HCT116 (cell line): ENCODE measurements at regions of chr12 and their contacts with region 1.

Region 1: DNA sequence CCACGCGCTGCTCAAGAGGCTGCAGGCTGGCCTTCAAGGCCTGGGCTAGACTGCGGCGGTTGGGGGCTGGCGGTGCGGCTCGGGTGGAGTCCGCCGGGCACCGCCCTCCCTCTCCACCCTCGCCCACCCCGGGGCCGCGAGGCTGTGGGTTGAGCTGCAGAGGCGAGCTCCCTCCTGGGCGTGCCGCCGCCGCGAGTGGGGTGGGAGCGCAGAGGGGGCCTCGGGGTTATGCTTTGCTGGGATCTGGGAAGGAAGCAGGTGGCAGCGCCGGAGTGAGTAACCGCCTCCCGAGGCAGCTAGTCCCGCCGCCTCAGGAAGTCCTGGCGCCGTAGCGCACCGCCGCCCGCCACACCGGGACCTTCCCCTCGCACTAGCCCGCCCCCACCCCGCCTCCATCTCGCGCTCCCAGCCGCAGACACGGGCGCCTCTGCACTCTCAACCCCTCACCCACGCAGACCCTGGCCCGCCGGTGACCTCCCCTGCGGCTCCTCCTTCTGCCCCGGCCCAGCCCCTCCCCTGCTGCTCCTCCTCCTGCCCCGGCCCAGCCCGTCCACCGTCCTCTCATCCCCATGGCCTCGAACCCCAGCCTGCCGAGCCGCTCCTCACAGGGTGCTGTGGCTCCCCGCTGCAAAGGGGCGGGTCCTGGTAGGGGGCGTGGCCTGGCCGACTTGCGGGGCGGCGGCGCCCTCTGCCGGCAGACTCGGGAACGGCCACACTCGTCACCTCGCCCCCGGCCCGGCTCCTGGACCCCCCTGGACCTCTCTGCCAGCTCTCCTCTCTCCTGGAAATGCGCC is 16.6 kb downstream of the TAMALIN start:
- DNase-seq: peak; percentile 62
- ATAC-seq: peak; percentile 71
- H3K4me3 ChIP-seq: peak overlapping the region; percentile 47 to 62
- H3K27ac ChIP-seq: peak overlapping the region; percentile 77
- H3K4me1 ChIP-seq: peaks cover 22 to 61% of the 10 kb centered on the region in 2 experiments
- H3K27me3 ChIP-seq: no peaks in the 10 kb centered on the region
- CTCF ChIP-seq: peak in 2 of 3 experiments; percentile 90; a peak in 4 of 6 replicates
- POLR2A ChIP-seq: no peak
- RAD21 ChIP-seq: no peak

Region 2: GRCh38 chr12:51994959-51995358 is 28.4 kb before region 1 on chr12:
- CTCF ChIA-PET with region 1: interaction called, 44 read pairs
- POLR2A ChIA-PET with region 1: no interaction called
- RAD21 ChIA-PET with region 1: interaction called in 1 of 2 experiments, 3 read pairs
- intact Hi-C with region 1: loop called (anchors 1 kb)
- DNase-seq: no peak
- ATAC-seq: no peak
- H3K4me3 ChIP-seq: no peak overlapping the region
- H3K27ac ChIP-seq: no peak overlapping the region
- H3K4me1 ChIP-seq: no peaks in the 10 kb centered on the region
- H3K27me3 ChIP-seq: no peaks in the 10 kb centered on the region
- CTCF ChIP-seq: no peak
- POLR2A ChIP-seq: no peak
- RAD21 ChIP-seq: no peak

Region 3: GRCh38 chr12:52010152-52010622 is 13.2 kb before region 1 on chr12:
- CTCF ChIA-PET with region 1: interaction called, 137 read pairs
- POLR2A ChIA-PET with region 1: interaction called, 15 read pairs
- RAD21 ChIA-PET with region 1: interaction called in 1 of 2 experiments, 21 read pairs
- intact Hi-C with region 1: no loop called
- DNase-seq: no peak
- ATAC-seq: peak; percentile 36; the same call in 1 of the 2 replicates
- H3K4me3 ChIP-seq: no peak overlapping the region
- H3K27ac ChIP-seq: no peak overlapping the region
- H3K4me1 ChIP-seq: no peaks in the 10 kb centered on the region
- H3K27me3 ChIP-seq: no peaks in the 10 kb centered on the region
- CTCF ChIP-seq: no peak
- POLR2A ChIP-seq: no peak
- RAD21 ChIP-seq: no peak

Region 4: GRCh38 chr12:52063981-52064649 is 40.7 kb after region 1 on chr12:
- CTCF ChIA-PET with region 1: interaction called, 70 read pairs
- POLR2A ChIA-PET with region 1: interaction called, 18 read pairs
- RAD21 ChIA-PET with region 1: interaction called, 5 to 13 read pairs
- intact Hi-C with region 1: loop called (anchors 1 kb)
- DNase-seq: no peak
- ATAC-seq: peak; percentile 33; the same call in 1 of the 2 replicates
- H3K4me3 ChIP-seq: no peak overlapping the region
- H3K27ac ChIP-seq: no peak overlapping the region
- H3K4me1 ChIP-seq: peaks cover 0 to 24% of the 10 kb centered on the region in 2 experiments; a peak in 2 of 4 replicates
- H3K27me3 ChIP-seq: no peaks in the 10 kb centered on the region
- CTCF ChIP-seq: no peak
- POLR2A ChIP-seq: no peak
- RAD21 ChIP-seq: no peak

Region 5: DNA sequence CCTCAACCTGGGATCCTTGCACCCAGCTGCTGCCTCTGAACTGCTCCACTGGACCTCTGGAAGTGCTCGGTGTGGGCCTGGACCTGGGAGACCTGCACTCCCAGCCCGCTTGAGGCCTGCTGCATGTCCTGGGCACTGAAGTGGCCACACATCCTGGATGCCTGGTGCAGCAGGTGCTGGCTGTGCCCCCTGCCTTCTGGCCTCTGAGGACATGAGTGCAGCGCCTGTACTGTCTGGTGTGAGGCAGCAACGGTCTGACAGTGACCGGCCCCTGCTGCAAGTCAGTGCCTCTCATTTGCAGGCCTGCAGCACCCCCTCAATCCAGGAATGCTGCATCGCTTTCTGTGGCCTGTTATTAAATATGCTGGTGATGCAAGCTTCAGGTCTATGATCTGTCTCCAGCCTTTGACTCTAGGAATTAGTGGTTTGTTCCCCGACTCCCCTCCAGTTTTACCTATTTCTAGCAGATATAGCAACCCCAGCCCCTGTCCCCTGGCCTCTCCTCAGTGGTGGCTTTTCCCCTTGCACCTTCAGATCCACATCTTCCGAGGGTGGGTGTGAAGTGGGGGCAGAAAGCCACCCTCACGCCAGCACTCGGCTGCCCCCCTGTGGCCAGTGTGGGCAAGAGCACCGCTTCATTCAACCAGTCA is 59.7 kb after region 1 on chr12:
- CTCF ChIA-PET with region 1: interaction called, 123 read pairs
- POLR2A ChIA-PET with region 1: interaction called, 6 read pairs
- RAD21 ChIA-PET with region 1: interaction called, 9 to 12 read pairs
- intact Hi-C with region 1: loop called (anchors 1 kb)
- DNase-seq: no peak
- ATAC-seq: peak; percentile 89
- H3K4me3 ChIP-seq: no peak overlapping the region
- H3K27ac ChIP-seq: no peak overlapping the region
- H3K4me1 ChIP-seq: peaks cover 0 to 5% of the 10 kb centered on the region in 2 experiments; a peak in 1 of 4 replicates
- H3K27me3 ChIP-seq: no peaks in the 10 kb centered on the region; the same call in 1 of the 2 replicates
- CTCF ChIP-seq: peak; percentile 96 to 100 (median 98)
- POLR2A ChIP-seq: no peak
- RAD21 ChIP-seq: peak; percentile 93

Region 6: DNA sequence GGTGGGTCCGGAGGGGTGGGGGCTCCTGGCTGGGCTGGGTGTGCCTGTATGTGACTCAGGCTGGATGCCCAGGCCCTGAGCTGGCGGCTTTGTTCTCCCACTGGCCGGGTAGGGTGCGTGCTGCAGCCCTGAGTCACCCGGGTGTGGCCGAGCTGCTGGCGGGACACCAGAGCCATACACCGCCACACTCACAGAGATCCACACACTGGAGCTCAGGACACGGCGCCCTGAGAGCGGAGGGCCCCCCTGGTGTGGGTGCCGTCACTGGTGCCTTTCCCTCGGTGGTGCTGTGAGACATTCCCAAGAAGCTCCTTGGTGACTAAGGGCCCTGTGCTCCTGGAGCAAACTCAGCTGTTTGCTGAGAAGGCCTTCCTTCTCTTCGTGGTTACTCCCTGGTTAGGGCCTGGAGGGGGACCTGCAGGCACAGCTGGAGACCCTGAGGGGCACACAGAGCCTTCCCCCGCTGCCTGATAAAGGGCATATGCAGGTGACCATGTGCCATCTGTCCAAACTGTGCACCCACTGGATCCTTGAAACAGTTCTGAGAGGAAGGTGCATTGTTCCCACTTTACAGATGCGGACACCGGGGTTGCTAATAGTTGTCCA is 124.1 kb after region 1 on chr12:
- CTCF ChIA-PET with region 1: interaction called, 22 read pairs
- POLR2A ChIA-PET with region 1: interaction called, 3 read pairs
- RAD21 ChIA-PET with region 1: interaction called in 1 of 2 experiments, 3 read pairs
- intact Hi-C with region 1: no loop called
- DNase-seq: peak; percentile 99
- ATAC-seq: peak; percentile 61
- H3K4me3 ChIP-seq: peak overlapping the region; percentile 46 to 55
- H3K27ac ChIP-seq: peak overlapping the region; percentile 100
- H3K4me1 ChIP-seq: peaks cover 83 to 99% of the 10 kb centered on the region in 2 experiments
- H3K27me3 ChIP-seq: no peaks in the 10 kb centered on the region
- CTCF ChIP-seq: no peak
- POLR2A ChIP-seq: no peak
- RAD21 ChIP-seq: no peak